Breast epithelium (tissue), 4 donors: ENCODE measurements at regions of chr20 and their contacts with region 1.

Region 1: DNA sequence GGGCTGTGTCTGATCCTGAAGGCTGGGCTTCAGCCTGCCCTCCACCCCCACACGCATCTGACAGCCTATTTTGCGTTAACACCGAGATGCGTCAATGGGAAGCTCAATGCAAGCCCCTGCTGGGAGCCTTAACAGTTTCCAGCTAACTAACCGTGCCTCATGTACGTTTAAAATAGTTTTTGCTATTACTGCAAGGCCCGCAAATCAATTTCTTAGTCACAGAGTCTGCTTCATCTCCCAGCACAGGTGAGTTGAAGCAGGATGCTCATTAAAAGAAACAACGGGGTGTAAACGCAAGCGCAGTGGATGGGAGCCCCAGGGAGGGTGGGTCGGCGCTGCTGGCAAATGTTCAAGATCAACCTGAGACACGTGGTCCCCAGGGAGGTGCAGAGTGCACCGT is 142.8 kb upstream of the PHACTR3 start:
- DNase-seq: no peak
- H3K4me3 ChIP-seq: no peak overlapping the region
- H3K27ac ChIP-seq: no peak overlapping the region
- H3K4me1 ChIP-seq: no peaks in the 10 kb centered on the region
- H3K27me3 ChIP-seq: peaks cover 0 to 4% of the 10 kb centered on the region in 2 donors
- CTCF ChIP-seq: no peak
- POLR2A ChIP-seq: no peak

Region 2: GRCh38 chr20:59485576-59486454 is 24.3 kb after region 1 on chr20:
- intact Hi-C with region 1: loop called (anchors 1 kb)
- DNase-seq: no peak
- H3K4me3 ChIP-seq: no peak overlapping the region
- H3K27ac ChIP-seq: no peak overlapping the region
- H3K4me1 ChIP-seq: no peaks in the 10 kb centered on the region
- H3K27me3 ChIP-seq: peaks cover 0 to 4% of the 10 kb centered on the region in 2 donors
- CTCF ChIP-seq: no peak
- POLR2A ChIP-seq: no peak